ENCODE measurements at regions of chr20 and their contacts with region 1.

Region 1: DNA sequence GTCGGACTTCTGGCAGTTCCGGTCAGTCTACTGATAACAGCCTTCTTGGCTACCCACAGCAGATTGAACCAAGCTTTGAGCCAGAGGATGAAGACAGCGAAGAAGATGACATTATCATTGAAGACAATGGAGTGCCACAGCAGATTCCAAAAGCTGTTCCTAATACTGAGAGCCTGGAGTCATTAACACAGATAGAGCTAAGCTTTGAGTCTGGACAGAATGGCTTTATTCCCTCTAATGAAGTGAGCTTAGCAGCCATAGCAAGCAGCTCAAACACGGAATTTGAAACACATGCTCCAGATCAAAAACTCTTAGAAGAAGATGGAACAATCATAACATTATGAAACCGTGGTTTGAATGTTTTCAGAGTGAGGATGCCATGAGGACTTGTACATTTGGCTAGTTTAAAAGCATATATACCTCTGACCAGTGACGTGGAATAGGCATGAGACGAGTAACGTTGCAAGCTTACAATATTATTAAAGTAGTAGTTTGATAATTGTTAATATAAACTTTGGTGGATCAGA is 18.8 kb downstream of the PARD6B start:
- DNase-seq: no peak
- ATAC-seq: no peak
- H3K4me3 Mint-ChIP-seq: no peak overlapping the region
- H3K27ac Mint-ChIP-seq: no peak overlapping the region
- H3K4me1 Mint-ChIP-seq: peaks cover 22% of the 10 kb centered on the region
- H3K27me3 Mint-ChIP-seq: no peaks in the 10 kb centered on the region
- CTCF ChIP-seq: no peak

Region 2: DNA sequence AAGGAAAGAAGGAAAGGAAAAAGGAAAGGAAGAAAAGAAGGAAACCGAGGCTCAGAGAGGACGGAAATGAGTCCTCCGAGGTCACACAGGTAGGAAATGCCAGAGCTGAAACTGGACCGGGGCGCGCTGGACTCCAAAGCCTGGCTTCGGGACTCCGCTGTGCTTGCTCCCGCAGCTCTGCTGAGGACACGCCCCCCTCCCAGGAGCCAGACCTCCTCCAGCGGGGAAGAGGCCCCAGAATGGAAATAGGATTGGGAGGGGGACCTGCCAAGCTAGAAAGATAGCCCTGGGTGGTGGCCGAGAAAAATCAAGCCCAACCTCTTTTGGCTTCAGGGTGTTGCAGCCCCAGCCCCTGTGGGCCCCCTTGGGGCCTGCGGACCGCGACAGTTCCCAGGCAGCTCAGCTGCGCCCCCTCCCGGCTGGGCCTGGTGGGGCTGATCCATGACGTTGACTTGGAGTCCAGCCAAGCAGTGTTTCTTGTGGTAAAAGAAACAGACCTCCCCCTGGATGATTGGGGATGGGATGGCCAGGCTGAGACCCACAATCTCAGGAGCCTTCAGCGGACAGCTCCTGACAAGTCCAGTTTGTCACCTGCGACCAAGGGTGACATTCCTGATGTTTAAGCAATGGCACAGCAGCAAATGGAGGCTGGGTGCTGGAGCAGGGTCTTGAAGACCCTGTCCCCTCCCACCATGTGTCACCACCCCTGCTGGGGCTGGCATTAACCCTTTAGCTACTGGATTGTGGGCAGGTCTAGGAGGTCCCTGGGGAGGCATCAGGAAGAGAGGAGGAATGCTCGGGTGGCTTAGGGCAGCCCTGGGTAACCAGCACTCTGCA is 114.3 kb before region 1 on chr20:
- CTCF ChIA-PET with region 1: interaction called, 25 read pairs
- POLR2A ChIA-PET with region 1: interaction called, 3 read pairs
- DNase-seq: peak; percentile 93
- ATAC-seq: peak; percentile 78
- H3K4me3 Mint-ChIP-seq: peak overlapping the region; percentile 42
- H3K27ac Mint-ChIP-seq: peak overlapping the region; percentile 86
- H3K4me1 Mint-ChIP-seq: peaks cover 53% of the 10 kb centered on the region
- H3K27me3 Mint-ChIP-seq: no peaks in the 10 kb centered on the region
- CTCF ChIP-seq: peak; percentile 88

Region 3: DNA sequence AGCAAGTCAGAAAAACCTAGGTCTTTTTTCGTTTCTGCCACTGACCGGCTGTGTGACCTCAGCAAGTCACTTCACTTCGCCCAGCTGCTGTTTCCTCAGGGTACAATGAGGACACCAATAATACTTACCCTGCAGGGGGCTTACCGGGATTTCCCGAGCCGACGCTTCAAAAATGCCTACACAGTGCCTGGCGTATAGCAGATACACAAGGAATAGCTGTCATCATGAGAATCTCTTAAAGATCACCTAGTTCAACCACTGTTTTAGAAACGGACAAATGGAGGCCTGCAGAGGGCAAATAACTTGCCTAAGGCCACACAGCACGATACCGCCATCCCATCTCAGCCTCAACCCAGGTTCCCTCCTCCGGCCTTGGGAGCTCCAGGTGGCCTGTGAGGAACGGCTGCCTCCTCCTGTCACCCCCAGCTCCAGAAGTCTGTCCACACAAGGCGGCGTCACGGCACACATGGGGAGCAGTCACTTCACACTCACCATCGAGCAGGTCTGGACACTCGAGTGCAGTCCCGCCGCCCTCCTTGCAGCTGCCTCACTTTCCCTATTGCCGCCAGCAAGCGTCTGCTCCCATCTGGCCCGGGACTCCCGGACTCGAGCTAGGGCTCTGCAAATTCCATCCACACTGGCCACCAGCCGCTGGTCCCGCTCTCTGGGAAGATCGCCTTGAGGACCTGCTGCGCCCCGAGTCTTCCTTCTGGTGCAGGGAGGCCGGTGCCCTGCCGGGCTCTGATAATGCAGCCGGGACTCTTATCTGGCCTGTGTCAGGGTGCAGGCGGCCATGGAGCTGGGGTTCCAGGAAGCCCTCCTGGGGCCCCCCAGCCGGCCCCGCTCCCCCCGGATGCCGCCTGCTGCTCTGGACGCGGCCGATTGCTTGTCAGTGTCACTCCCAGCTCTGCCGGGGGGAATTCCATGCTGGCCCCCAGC is 59.3 kb before region 1 on chr20 and contains the start of gene RIPOR3:
- CTCF ChIA-PET with region 1: interaction called, 20 read pairs
- POLR2A ChIA-PET with region 1: interaction called, 3 read pairs
- DNase-seq: peak; percentile 49
- ATAC-seq: peak; percentile 46
- H3K4me3 Mint-ChIP-seq: peak within 1 kb of the TSS; percentile 78
- H3K27ac Mint-ChIP-seq: peak within 1 kb of the TSS; percentile 94
- H3K4me1 Mint-ChIP-seq: peaks cover 53% of the 10 kb centered on the region
- H3K27me3 Mint-ChIP-seq: no peaks in the 10 kb centered on the region
- CTCF ChIP-seq: no peak
- total RNA-seq, gene RIPOR3: 5.4 to 6.5 TPM (median 6.0 TPM) in 3 replicates

Region 4: GRCh38 chr20:50731055-50731871 is 18.9 kb before region 1 on chr20 and contains the start of gene PARD6B:
- CTCF ChIA-PET with region 1: interaction called, 39 read pairs
- POLR2A ChIA-PET with region 1: interaction called, 3 read pairs
- DNase-seq: peak; percentile 99
- ATAC-seq: peak; percentile 95
- H3K4me3 Mint-ChIP-seq: peak within 1 kb of the TSS; percentile 79
- H3K27ac Mint-ChIP-seq: peak within 1 kb of the TSS; percentile 95
- H3K4me1 Mint-ChIP-seq: peaks cover 40% of the 10 kb centered on the region
- H3K27me3 Mint-ChIP-seq: no peaks in the 10 kb centered on the region
- CTCF ChIP-seq: no peak
- total RNA-seq, gene PARD6B: 29.6 to 38.0 TPM (median 37.5 TPM) in 3 replicates

Region 5: GRCh38 chr20:50762435-50763201 is 12.4 kb after region 1 on chr20:
- CTCF ChIA-PET with region 1: interaction called, 14 read pairs
- POLR2A ChIA-PET with region 1: interaction called, 3 read pairs
- DNase-seq: no peak
- ATAC-seq: no peak
- H3K4me3 Mint-ChIP-seq: no peak overlapping the region
- H3K27ac Mint-ChIP-seq: no peak overlapping the region; the same call in 1 of the 2 replicates
- H3K4me1 Mint-ChIP-seq: peaks cover 27% of the 10 kb centered on the region
- H3K27me3 Mint-ChIP-seq: no peaks in the 10 kb centered on the region
- CTCF ChIP-seq: no peak

Region 6: DNA sequence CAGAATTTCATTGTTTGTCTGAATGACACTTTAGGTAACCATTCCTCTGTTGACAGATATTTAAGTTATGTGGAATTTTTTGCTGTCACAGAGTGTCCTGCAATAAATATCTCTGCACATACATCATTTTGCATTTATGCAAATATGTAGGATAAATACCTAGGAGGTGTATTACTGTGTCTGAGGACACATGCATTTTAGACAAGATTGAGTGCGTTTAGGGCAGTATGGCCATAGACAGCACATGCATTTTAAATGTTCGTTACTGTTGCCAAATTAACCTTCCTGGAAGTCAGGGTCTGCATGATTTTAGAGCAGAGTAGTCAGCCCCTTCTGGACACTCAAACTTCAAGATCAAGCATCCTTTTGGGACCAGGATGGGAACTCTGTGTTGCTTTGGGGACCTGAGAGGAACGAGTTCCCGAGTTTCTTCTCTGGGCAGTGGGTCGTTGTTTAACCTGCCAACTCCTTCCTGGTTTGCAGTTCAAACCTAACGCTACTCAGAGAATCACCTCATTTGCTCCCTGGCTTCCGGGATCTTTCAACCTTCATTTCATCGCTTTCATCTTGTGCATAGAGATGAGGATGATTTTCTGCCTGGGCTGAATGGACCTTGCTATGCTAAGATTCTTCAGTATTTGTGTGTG is 54.3 kb after region 1 on chr20:
- CTCF ChIA-PET with region 1: no interaction called
- POLR2A ChIA-PET with region 1: no interaction called
- DNase-seq: no peak
- ATAC-seq: no peak
- H3K4me3 Mint-ChIP-seq: no peak overlapping the region
- H3K27ac Mint-ChIP-seq: peak overlapping the region; percentile 48
- H3K4me1 Mint-ChIP-seq: peaks cover 29% of the 10 kb centered on the region
- H3K27me3 Mint-ChIP-seq: no peaks in the 10 kb centered on the region; the same call in 1 of the 2 replicates
- CTCF ChIP-seq: no peak

Measured in WTC11 (cell line).